GM10248 (cell line): ENCODE measurements at regions of chr17 and their contacts with region 1.

Region 1: DNA sequence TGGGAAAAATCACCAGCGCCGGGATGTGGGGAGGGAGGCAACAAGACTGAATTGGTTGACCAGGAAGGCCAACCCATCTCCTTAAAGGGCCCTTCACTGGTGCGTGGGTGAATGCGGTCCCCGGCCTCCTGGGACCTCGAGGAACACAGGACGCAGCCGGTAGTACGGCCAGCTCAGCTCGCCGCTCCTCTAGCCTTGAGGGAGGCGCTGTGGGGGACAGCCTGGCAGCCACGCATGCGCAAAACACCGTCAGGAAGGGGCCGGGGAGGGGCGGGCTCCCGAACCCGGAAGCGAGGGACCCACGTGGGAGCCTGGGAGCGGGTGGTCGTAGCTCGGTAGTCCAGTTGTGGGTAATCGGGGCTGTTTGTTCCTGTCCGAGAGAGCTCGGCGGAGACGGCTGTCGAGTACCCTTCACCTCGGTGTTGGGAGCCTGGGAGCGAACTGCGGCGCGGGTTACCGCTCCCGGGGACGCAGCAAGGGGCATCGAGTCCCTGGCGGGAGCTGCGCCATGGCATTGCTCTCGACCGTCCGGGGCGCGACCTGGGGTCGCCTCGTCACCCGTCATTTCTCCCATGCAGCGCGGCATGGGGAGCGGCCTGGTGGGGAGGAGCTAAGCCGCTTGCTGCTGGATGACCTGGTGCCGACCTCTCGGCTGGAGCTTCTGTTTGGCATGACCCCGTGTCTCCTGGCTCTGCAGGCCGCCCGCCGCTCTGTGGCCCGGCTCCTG is at the start of gene MRM1:
- DNase-seq: peak; percentile 96
- CTCF ChIP-seq: peak; percentile 18

Region 2: DNA sequence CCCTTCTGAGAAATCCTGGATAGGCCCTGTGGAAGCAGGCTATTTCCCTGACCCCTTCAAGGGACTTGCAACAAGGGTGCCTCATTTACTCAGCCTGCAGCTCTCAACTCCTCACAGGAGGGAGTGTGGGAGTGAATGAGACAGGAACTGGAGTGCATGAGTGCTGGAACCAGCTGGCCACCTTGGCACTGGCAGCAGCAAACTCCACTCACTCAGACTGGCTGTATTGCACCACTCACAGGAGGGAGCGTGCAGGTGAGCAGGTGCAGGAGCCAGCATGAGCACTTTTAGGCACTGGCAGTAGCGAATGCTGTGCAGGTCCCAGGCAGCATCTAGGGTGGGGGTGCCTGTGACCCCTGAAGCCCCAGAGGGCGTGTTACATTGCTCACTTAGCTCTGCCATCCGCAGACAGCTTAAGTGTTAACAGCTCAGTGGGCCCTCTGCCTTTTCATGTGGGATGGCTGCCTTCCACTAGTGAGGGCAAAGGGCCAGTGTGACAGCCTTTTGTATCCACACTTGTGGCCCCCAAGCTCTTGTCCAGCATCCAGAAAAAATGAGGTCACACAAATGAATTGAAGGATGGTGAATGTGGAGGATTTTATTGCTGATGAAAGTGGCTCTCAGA is 126.0 kb before region 1 on chr17:
- CTCF ChIA-PET with region 1: no interaction called
- POLR2A ChIA-PET with region 1: no interaction called
- DNase-seq: no peak
- CTCF ChIP-seq: no peak

Region 3: DNA sequence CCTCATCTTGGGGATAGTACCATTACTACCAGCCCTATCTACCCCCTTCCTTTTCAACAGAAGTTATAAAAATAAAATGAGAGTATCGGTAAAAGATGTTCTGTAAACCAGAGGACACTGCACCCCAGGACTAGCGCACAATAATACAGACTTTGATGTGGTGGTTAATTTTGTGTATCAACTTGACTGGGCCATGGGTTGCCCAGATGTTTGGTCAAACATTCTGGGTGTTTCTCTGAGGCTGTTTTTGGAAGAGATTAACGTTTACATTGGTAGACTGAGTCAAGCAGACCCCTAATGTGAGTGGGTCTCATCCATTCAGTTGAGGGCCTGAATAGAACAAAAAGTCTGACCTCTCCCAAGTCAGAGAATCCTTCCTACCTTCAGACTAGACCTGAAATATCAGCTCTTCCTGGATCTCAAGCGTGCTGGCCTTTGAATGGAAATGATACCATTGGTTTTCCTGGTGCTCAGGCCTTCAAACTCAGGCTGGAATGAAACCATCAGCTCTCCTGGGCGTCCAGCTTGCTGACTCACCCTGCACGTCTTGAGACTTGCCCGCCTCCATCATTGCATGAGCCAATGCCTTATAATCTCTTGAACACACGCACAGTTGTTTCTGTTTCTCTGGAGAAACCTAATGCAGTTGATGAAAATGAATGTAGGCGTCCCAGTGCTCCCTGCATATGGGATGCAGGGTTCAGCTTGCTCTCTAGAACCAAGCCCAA is 10.0 kb after region 1 on chr17:
- CTCF ChIA-PET with region 1: interaction called, 59 read pairs
- POLR2A ChIA-PET with region 1: no interaction called
- DNase-seq: no peak
- CTCF ChIP-seq: no peak

Region 4: DNA sequence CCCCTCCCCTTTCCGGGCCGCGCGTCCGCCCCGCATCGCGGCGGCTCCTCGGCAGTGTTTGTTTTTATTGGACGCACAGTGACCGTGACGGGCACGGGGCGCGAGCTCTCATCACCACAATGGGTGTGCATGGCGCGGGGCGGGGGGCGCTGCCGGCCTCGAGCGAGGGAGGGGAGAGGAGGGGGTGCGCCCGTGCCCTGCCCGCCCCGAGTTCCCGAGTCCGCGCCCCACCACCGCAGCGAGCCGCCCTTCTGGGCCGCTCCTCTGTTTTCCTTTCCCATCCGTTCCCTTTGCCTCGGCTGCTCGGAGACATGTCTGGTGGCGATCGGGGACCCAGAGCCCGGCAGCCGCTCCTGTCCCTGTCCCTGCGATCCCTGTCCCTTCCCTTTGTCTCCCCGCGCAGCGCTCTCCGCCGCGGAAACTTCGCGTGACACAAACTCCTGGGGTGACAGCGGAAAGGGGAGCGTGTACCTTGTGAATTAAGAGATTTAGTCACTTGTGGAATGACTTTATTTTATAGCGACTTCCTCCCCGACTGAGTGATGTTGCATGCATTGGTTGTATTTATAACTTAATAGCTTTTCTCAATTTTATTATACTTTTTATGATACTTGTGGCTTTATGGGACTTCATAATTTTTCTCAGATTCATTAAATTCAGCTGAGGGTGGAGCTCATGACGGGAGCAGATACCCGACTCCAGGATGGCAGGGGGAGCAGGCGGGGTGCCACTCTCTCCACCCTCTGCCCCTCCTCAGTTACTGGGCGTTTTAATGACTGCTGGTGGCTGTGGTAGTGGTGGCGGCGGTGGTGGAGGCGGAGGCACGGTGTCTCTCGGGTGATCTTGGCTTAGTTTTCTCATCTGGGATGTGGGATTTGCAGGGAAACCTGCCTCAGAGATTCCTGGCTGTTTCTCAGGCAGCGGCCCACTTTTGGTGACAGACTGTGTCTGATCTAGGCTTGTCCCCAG is 40.7 kb after region 1 on chr17:
- CTCF ChIA-PET with region 1: no interaction called
- POLR2A ChIA-PET with region 1: no interaction called
- DNase-seq: no peak
- CTCF ChIP-seq: no peak

Region 5: GRCh38 chr17:37047631-37048104 is 446.2 kb after region 1 on chr17:
- CTCF ChIA-PET with region 1: interaction called, 43 read pairs
- POLR2A ChIA-PET with region 1: interaction called, 3 read pairs
- DNase-seq: peak; percentile 76
- CTCF ChIP-seq: peak; percentile 79

Region 6: DNA sequence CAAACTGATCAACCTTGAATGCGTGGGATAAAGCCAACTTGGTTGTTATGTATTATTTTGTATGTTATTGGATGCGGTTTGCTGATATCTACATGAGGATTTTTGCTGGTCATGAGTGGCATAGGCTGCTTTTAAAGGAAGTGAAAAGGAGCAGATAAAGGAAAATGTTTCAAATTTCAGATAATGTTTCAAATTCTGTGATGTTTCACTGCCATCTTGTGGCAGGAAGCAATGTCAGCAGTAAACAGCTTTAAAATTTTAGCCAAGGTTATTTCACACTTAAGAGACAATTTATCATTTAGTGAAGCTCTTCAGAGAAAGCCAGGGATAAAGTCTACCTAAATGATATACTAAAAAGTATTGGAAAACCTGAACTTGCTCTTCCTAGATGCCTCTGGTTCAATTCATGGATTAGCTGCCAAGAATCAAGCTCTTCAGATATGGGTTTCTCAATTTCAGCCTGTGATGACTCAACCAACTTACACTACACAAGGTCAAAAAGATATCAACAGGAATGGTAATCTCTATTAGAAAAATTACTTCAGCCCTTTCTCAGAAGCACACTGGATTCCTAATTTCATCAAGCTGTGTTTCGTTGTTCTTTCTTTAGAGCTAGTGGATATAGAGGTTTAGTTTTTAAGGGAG is 638.3 kb after region 1 on chr17:
- CTCF ChIA-PET with region 1: interaction called, 44 read pairs
- POLR2A ChIA-PET with region 1: no interaction called
- DNase-seq: peak; percentile 28
- CTCF ChIP-seq: peak; percentile 77